Posterior vena cava (tissue), 2 donors: ENCODE measurements at regions of chr20 and their contacts with region 1.

Region 1: DNA sequence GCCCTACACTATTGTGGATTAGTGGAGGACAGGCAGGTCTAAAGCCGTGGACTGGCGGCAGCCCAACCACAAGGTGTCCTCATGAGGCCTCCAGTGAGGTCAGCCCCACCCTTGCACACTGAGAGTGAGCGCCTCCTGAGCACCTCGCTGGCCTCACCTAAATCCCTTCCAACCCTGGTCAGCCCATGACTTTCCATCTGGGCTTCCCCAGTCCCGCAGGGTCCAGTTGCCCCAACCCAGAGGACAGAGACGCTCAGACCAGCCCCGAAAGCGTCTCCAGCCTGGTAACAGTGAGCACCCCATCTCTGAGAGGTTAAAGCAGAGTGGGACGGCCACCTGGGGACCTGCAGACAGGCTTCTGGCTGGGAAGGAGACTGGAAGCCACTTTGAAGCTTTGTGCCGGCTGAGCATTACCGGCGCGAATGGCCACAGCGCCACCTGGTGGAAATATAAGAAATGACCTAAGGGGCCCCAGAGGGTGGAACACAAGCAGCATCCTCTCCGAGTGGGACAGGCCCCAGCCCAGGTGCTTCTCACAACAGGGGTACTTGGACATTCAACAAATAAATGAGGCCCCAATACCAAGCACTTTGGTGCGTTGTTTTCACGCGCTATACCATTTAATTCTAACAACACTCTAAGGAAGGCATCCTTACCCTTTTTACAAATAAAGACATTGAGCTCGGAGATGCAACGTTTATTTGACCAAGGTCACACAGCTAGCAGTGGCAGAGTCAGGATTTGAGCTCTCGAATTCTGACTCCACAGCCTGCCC is 65.7 kb upstream of the TOP1 start:
- DNase-seq: peak; percentile 88

Region 2: GRCh38 chr20:39412091-39412490 is 1550.8 kb before region 1 on chr20:
- intact Hi-C with region 1: loop called in 1 of 2 experiments (anchors 5 kb)
- DNase-seq: no peak

Region 3: DNA sequence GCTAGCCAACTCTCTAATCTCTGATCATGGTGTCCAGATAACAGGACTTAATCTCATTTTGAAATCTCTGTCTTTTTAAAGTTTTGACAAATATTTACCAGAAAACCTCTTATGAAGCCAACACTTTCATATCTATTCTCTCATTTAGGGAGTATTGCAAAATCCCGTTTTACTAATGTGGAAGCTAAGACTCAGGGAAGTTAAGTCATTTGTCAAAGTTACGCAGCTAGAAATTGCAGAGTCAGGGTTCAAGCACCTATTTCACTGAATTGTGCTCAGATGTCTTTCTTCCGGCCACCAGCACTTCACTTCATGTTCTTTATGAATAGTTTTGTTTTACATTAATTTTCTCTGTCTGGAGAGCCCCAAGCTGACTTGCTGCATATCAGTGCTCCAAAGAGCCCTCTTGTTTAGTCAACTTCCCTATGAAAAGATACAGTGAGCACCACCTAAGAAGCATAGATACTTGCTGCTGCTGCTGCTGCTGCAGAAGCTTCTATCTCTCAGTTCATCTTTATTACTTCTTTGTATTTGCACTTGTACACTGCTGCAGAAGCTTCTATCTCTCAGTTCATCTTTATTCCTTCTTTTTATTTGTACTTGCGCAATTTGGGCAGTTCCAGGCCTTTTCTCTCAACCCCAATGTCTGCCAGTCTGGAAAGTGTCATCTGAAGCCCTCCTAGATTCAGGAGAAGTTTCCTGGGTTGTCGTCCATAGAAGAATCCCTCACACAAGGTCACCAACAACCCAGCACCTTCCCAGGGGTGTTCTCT is 603.6 kb before region 1 on chr20:
- intact Hi-C with region 1: no loop called
- DNase-seq: no peak

Region 4: DNA sequence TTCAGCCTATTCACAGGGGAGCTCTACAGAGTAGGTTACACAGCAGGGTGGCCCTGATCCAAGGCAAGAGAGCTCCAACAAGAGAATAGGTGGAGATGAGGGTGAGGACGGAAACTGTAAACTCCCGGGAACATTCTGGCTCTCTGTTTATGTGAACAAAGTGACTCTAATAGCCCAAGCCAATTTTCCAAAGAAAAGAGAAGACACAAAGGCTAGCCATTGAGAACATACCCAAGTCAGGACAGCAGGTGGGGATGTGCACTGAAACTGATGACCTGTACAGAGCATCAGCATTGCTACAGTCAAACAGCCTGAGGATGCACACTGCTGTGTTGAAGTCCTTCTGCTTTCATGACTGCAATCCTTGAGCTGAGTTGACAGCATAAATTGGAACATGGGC is 70.3 kb before region 1 on chr20:
- intact Hi-C with region 1: no loop called
- DNase-seq: no peak